ENCODE measurements at regions of chr13 and their contacts with region 1.

Region 1: GRCh38 chr13:31538067-31539042 is 201.0 kb upstream of the RXFP2 start:
- DNase-seq: peak; percentile 8
- ATAC-seq: peak; percentile 78
- H3K4me3 ChIP-seq: no peak overlapping the region
- H3K27ac ChIP-seq: no peak overlapping the region
- H3K4me1 ChIP-seq: no peaks in the 10 kb centered on the region
- H3K27me3 ChIP-seq: peaks cover 36% of the 10 kb centered on the region
- CTCF ChIP-seq: peak; percentile 13 to 65 (median 63); a peak in 4 of 6 replicates
- POLR2A ChIP-seq: no peak
- RAD21 ChIP-seq: peak; percentile 22; the same call in 1 of the 2 replicates

Region 2: GRCh38 chr13:30806784-30807183 is 731.6 kb before region 1 on chr13:
- CTCF ChIA-PET with region 1: no interaction called
- POLR2A ChIA-PET with region 1: no interaction called
- RAD21 ChIA-PET with region 1: no interaction called
- intact Hi-C with region 1: no loop called
- DNase-seq: no peak
- ATAC-seq: no peak
- H3K4me3 ChIP-seq: no peak overlapping the region
- H3K27ac ChIP-seq: no peak overlapping the region; the same call in 1 of the 2 replicates
- H3K4me1 ChIP-seq: peaks cover 26 to 47% of the 10 kb centered on the region in 2 experiments
- H3K27me3 ChIP-seq: no peaks in the 10 kb centered on the region
- CTCF ChIP-seq: no peak
- POLR2A ChIP-seq: no peak
- RAD21 ChIP-seq: no peak

Region 3: GRCh38 chr13:31518645-31519044 is 19.7 kb before region 1 on chr13:
- CTCF ChIA-PET with region 1: interaction called, 11 read pairs
- POLR2A ChIA-PET with region 1: no interaction called
- RAD21 ChIA-PET with region 1: no interaction called
- intact Hi-C with region 1: no loop called
- DNase-seq: no peak
- ATAC-seq: no peak
- H3K4me3 ChIP-seq: no peak overlapping the region
- H3K27ac ChIP-seq: no peak overlapping the region
- H3K4me1 ChIP-seq: no peaks in the 10 kb centered on the region
- H3K27me3 ChIP-seq: peaks cover 67% of the 10 kb centered on the region
- CTCF ChIP-seq: no peak
- POLR2A ChIP-seq: no peak
- RAD21 ChIP-seq: no peak

Region 4: DNA sequence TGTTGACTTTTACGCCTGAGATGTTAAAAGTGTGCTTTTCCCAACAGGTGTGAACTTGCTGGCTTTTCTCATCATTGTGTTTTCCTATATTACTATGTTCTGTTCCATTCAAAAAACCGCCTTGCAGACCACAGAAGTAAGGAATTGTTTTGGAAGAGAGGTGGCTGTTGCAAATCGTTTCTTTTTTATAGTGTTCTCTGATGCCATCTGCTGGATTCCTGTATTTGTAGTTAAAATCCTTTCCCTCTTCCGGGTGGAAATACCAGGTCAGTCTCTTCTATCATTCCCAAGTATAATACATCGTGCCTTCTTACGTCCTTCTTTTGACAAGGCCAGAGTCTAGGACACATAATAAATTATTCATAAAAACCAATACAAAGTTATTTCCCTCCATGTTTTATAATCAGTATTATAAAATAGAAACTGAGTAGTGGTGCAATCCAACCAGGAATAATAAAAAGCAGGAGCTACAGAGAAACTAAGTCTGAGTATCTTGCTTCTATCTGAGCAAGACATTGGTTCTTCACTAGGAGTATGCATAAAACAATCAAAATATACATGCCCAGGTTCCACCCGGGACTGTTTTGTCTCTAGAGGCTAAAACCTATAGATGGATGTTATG is 258.9 kb after region 1 on chr13:
- CTCF ChIA-PET with region 1: interaction called, 5 read pairs
- POLR2A ChIA-PET with region 1: no interaction called
- RAD21 ChIA-PET with region 1: interaction called in 1 of 2 experiments, 3 read pairs
- intact Hi-C with region 1: loop called (anchors 1 kb)
- DNase-seq: peak; percentile 8
- ATAC-seq: peak; percentile 73
- H3K4me3 ChIP-seq: no peak overlapping the region
- H3K27ac ChIP-seq: no peak overlapping the region
- H3K4me1 ChIP-seq: no peaks in the 10 kb centered on the region
- H3K27me3 ChIP-seq: peaks cover 5% of the 10 kb centered on the region; the same call in 1 of the 2 replicates
- CTCF ChIP-seq: peak in 2 of 3 experiments; percentile 36 to 50; a peak in 3 of 6 replicates
- POLR2A ChIP-seq: no peak
- RAD21 ChIP-seq: peak; percentile 47